ENCODE measurements at regions of chrX and their contacts with region 1.

Region 1: GRCh38 chrX:16719334-16720084 is at the start of gene SYAP1:
- DNase-seq: peak; percentile 98
- H3K4me3 ChIP-seq: peak within 1 kb of the TSS; percentile 62 to 84 (median 78)
- H3K27ac ChIP-seq: peak within 1 kb of the TSS; percentile 92 to 94 (median 92)
- H3K4me1 ChIP-seq: peaks cover 10 to 28% (median 20%) of the 10 kb centered on the region in 4 donors
- H3K27me3 ChIP-seq: no peaks in the 10 kb centered on the region
- CTCF ChIP-seq: peak in 1 of 3 experiments; percentile 3
- EP300 ChIP-seq: no peak
- POLR2A ChIP-seq: peak; percentile 87
- total RNA-seq, gene SYAP1: 22.5 to 30.9 (median 28.5) TPM

Region 2: DNA sequence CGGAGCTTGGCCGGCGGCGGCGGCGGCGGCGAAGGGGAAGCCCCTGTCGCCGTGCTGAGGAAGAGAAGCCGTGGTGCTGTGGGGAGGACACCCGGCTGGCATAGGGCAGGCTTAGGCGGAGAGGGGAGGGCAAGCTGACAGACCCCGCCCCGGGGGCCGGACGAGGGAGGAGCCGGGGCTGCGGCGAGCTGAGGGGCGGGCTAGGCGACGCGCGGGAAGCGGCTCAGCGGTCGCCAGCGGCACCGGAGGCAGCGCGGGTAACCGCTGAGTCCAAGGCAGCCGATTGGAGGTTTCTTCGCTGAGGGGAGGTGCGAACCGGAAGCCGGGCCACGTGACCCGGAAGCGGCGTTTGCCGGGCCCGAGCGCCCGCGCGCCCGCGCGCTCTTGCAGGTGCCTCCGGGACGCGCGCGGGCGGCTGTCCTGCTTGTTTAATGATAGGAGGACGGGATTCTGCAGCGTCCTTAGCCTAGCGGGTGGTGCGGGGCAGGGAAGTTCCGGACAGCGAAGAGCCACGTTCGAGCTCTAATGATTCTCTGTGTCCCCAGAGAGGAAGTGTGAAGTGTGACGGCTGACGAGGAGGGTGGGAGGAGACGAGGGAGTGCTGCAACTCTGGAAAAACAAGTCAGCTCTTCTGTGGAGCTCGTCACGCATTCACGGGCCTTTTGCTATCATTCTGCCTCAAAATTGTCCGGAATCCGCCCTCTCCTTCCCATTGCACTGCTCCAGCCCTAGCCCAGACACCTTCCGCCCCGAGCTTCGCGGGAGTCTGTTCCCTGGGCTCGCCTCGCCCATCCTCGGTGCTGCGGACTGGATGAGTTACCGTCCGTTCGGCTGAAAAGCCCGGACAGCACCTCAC is 864.6 kb before region 1 on chrX and contains the start of gene AP1S2:
- intact Hi-C with region 1: loop called (anchors 10 kb)
- DNase-seq: peak; percentile 94
- H3K4me3 ChIP-seq: peak within 1 kb of the TSS; percentile 75 to 93 (median 80)
- H3K27ac ChIP-seq: peak within 1 kb of the TSS; percentile 88 to 96 (median 95)
- H3K4me1 ChIP-seq: peaks cover 12 to 41% (median 28%) of the 10 kb centered on the region in 4 donors
- H3K27me3 ChIP-seq: no peaks in the 10 kb centered on the region
- CTCF ChIP-seq: no peak
- EP300 ChIP-seq: no peak
- POLR2A ChIP-seq: peak; percentile 55
- total RNA-seq, gene AP1S2: 136 to 142 (median 140) TPM

Region 3: GRCh38 chrX:16282193-16282592 is 437.3 kb before region 1 on chrX:
- intact Hi-C with region 1: no loop called
- DNase-seq: no peak
- H3K4me3 ChIP-seq: no peak overlapping the region
- H3K27ac ChIP-seq: no peak overlapping the region
- H3K4me1 ChIP-seq: no peaks in the 10 kb centered on the region
- H3K27me3 ChIP-seq: no peaks in the 10 kb centered on the region
- CTCF ChIP-seq: no peak
- EP300 ChIP-seq: no peak
- POLR2A ChIP-seq: no peak

Region 4: DNA sequence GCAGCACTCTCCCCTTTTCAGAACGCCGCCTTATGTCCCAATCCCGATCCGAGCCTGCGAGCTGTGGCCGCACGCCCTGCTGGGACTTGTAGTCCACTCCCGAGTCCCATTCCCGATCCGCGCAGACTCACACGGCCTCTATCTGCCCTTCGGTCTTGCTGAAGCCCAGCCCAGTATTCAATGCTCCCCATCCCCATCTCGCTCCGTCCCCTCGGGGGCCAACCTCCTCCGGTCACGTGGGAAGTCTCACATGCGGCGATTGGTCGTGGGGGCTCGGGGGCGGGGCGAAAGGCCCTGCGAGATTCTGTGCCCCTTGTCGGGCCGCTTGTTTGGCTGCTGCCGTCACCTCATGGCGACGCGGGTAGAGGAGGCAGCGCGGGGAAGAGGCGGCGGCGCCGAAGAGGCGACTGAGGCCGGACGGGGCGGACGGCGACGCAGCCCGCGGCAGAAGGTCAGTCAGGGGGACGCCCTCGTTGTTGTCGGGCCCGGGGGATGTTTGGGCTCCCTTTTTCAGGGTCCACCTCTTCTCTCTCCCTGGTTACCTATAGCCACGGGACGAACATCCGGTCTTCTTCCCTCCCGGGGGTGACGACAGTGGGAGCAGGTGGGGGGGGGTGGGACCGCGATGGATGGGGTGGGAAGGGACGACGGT is 66.8 kb after region 1 on chrX and contains the start of gene TXLNG:
- intact Hi-C with region 1: loop called (anchors 5 kb)
- DNase-seq: peak; percentile 98
- H3K4me3 ChIP-seq: peak within 1 kb of the TSS; percentile 72 to 97 (median 80)
- H3K27ac ChIP-seq: peak within 1 kb of the TSS; percentile 88 to 94 (median 90)
- H3K4me1 ChIP-seq: peaks cover 11 to 26% (median 16%) of the 10 kb centered on the region in 4 donors
- H3K27me3 ChIP-seq: no peaks in the 10 kb centered on the region
- CTCF ChIP-seq: no peak
- EP300 ChIP-seq: no peak
- POLR2A ChIP-seq: peak; percentile 76
- total RNA-seq, gene TXLNG: 9.6 to 13.6 (median 11.9) TPM

Region 5: GRCh38 chrX:16796298-16796697 is 76.8 kb after region 1 on chrX:
- intact Hi-C with region 1: no loop called
- DNase-seq: no peak
- H3K4me3 ChIP-seq: no peak overlapping the region
- H3K27ac ChIP-seq: no peak overlapping the region
- H3K4me1 ChIP-seq: peaks cover 0 to 12% (median 3%) of the 10 kb centered on the region in 4 donors
- H3K27me3 ChIP-seq: no peaks in the 10 kb centered on the region
- CTCF ChIP-seq: no peak
- EP300 ChIP-seq: no peak
- POLR2A ChIP-seq: no peak

Region 6: GRCh38 chrX:16903274-16904022 is 183.9 kb after region 1 on chrX:
- intact Hi-C with region 1: no loop called
- DNase-seq: no peak
- H3K4me3 ChIP-seq: no peak overlapping the region
- H3K27ac ChIP-seq: no peak overlapping the region
- H3K4me1 ChIP-seq: no peaks in the 10 kb centered on the region
- H3K27me3 ChIP-seq: peaks cover 0 to 5% (median 0%) of the 10 kb centered on the region in 4 donors
- CTCF ChIP-seq: no peak
- EP300 ChIP-seq: no peak
- POLR2A ChIP-seq: no peak

Region 7: GRCh38 chrX:17007206-17007683 is 287.7 kb after region 1 on chrX:
- intact Hi-C with region 1: no loop called
- DNase-seq: no peak
- H3K4me3 ChIP-seq: no peak overlapping the region
- H3K27ac ChIP-seq: no peak overlapping the region
- H3K4me1 ChIP-seq: peaks cover 0 to 11% (median 0%) of the 10 kb centered on the region in 4 donors
- H3K27me3 ChIP-seq: no peaks in the 10 kb centered on the region
- CTCF ChIP-seq: peak in 2 of 3 experiments; percentile 18 to 32
- EP300 ChIP-seq: no peak
- POLR2A ChIP-seq: no peak